ENCODE measurements at regions of chr4 and their contacts with region 1.

Region 1: DNA sequence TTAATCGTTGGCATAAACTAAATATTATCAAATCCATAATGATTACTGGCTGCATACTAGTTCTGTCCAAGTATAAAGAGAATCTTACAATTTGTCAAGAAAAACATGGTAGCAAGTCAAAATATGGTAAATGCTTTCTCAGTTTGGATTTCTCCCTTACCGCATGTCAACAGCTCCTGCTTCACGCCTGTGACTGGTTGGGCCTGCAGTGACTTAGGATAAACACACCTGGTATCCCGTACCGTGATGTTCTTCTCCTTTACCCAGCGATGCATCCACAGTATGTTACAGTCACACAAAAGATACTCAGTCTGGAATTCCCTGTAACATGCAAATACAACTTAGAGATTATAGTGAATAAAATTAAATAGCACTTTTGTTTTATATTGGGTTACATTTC is 71.1 kb downstream of the ADGRA3 start:
- DNase-seq: peak; percentile 9
- H3K4me3 Mint-ChIP-seq: peak overlapping the region; percentile 10
- H3K27ac Mint-ChIP-seq: peak overlapping the region; percentile 93
- H3K4me1 Mint-ChIP-seq: peaks cover 40% of the 10 kb centered on the region
- H3K27me3 Mint-ChIP-seq: no peaks in the 10 kb centered on the region

Region 2: GRCh38 chr4:22287631-22288030 is 157.2 kb before region 1 on chr4:
- CTCF ChIA-PET with region 1: no interaction called
- intact Hi-C with region 1: no loop called
- DNase-seq: no peak
- H3K4me3 Mint-ChIP-seq: no peak overlapping the region
- H3K27ac Mint-ChIP-seq: no peak overlapping the region
- H3K4me1 Mint-ChIP-seq: no peaks in the 10 kb centered on the region
- H3K27me3 Mint-ChIP-seq: peaks cover 7% of the 10 kb centered on the region

Region 3: DNA sequence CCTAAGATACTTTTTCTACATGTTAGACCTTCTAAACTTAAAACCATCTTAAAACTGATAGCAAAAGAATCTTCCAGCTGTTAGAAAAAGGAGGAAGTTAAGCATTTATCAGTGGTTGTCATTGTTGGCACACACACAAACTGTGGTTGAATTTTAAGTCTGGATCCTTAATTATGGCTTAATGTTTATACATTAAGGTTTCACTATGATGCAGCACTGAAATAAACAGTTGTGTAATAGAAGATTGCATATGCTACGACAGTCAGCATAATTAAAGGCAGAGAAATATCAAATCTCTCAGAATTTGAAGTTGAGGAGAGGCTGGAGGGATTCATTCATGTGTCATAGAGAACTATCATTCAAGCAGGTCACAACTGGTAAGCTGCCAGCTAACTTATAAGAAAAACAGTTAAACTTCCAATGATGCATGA is 38.8 kb after region 1 on chr4:
- CTCF ChIA-PET with region 1: no interaction called
- intact Hi-C with region 1: loop called (anchors 2 kb)
- DNase-seq: no peak
- H3K4me3 Mint-ChIP-seq: no peak overlapping the region
- H3K27ac Mint-ChIP-seq: no peak overlapping the region
- H3K4me1 Mint-ChIP-seq: peaks cover 26% of the 10 kb centered on the region
- H3K27me3 Mint-ChIP-seq: no peaks in the 10 kb centered on the region

Region 4: DNA sequence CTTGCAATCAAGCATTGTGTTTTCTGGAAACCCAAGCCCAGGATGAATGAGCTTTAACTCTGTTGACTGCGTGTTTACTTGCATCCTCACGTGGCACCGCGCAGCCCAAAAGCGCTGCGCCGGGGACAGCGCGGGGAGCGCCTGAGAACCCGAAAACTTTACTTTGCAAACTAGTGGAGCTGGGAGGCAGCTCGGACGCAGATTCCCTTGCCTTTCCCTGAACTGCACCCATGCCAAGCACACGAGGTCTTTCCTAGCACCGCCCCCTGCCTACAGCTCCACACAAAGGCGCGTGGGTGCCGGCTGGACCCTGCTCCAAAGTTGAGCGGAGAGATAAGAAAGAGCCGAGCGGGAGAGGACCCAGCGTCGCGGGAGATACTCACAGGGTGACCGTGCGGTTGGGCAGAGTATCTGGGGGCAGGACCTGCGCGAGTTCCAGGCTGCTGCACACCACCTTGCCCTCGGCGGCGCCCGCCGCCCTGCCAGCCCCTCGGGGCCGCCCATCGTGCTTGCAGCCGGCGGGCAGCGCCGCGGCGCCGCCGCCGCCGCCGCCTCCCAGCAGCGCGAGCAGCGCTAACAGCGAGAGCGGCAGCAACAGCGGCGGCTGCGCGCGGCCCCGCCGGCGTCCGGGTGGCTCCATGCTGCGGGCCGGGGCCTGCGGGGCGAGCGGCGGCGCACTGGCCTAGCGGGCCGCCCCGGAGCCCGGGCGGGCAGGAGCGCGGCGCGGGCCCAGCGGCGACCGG is 70.5 kb after region 1 on chr4:
- CTCF ChIA-PET with region 1: interaction called, 3 read pairs
- intact Hi-C with region 1: loop called (anchors 1 kb)
- DNase-seq: peak; percentile 34
- H3K4me3 Mint-ChIP-seq: peak overlapping the region; percentile 97
- H3K27ac Mint-ChIP-seq: peak overlapping the region; percentile 77
- H3K4me1 Mint-ChIP-seq: peaks cover 17% of the 10 kb centered on the region
- H3K27me3 Mint-ChIP-seq: peaks cover 9% of the 10 kb centered on the region

Region 5: DNA sequence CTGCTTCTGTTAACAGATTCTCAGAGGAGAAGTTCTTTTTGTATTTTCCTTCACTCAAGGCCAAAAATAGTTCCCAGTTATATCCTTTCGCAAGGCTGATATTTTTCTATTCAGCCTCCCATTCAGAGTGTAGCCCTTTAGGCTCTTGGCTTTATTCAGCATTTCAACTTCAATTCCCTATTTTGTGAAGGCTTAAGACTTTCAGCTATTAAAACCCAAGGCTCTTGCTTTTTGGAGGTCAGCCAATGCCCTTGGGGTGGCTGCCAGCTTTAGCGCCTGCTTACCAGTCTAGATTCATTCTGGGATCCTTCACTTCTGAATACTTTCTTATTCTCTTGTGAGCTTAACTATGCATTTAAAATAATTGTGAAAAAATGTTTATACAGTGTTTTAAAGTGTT is 128.4 kb after region 1 on chr4:
- CTCF ChIA-PET with region 1: no interaction called
- intact Hi-C with region 1: loop called (anchors 10 kb)
- DNase-seq: no peak
- H3K4me3 Mint-ChIP-seq: no peak overlapping the region
- H3K27ac Mint-ChIP-seq: no peak overlapping the region
- H3K4me1 Mint-ChIP-seq: peaks cover 7% of the 10 kb centered on the region
- H3K27me3 Mint-ChIP-seq: no peaks in the 10 kb centered on the region